Activated naive CD8-positive, alpha-beta T cell treated with anti-CD3 and anti-CD28 coated beads, Interleukin-2, amount 10 ng/mL, durations not matched to agents 7 days and 5 days (primary cell): ENCODE measurements at regions of chr6 and their contacts with region 1.

Region 1: GRCh38 chr6:52995913-52996645 is 995 bp upstream of the GSTA4 start:
- DNase-seq: peak; percentile 53
- ATAC-seq: no peak
- H3K4me3 Mint-ChIP-seq: peak overlapping the region; percentile 88
- H3K27ac Mint-ChIP-seq: peak overlapping the region; percentile 83
- H3K4me1 Mint-ChIP-seq: peaks cover 18% of the 10 kb centered on the region
- H3K27me3 Mint-ChIP-seq: peaks cover 13% of the 10 kb centered on the region

Region 2: DNA sequence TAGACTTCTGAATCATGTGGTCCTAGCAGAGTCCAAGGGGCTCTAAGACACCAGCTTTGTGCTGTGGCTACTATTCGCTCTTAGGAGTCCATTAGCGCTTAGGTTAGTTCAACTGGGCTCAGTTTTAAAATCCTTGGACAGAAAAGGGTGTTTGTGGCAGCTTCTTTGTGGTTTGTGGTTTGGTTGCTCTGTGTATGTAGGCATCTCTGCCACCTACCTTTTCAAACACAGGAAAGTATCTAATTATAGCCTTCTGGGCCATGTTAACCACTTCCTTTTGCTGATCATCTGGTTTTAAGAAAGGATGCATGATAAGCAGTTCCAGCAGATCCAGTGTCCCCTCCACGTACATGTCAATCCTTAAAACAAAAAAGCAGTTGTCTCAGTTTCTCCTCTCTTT is 11.8 kb before region 1 on chr6:
- POLR2A ChIA-PET with region 1: interaction called, 12 read pairs
- DNase-seq: no peak
- ATAC-seq: peak; percentile 84
- H3K4me3 Mint-ChIP-seq: peak overlapping the region; percentile 71
- H3K27ac Mint-ChIP-seq: peak overlapping the region; percentile 37
- H3K4me1 Mint-ChIP-seq: peaks cover 26% of the 10 kb centered on the region
- H3K27me3 Mint-ChIP-seq: peaks cover 13% of the 10 kb centered on the region

Region 3: GRCh38 chr6:53064726-53065215 is 68.7 kb after region 1 on chr6:
- POLR2A ChIA-PET with region 1: interaction called, 11 read pairs
- DNase-seq: peak; percentile 87
- ATAC-seq: peak; percentile 79
- H3K4me3 Mint-ChIP-seq: peak overlapping the region; percentile 97
- H3K27ac Mint-ChIP-seq: peak overlapping the region; percentile 97
- H3K4me1 Mint-ChIP-seq: peaks cover 34% of the 10 kb centered on the region
- H3K27me3 Mint-ChIP-seq: no peaks in the 10 kb centered on the region